ENCODE measurements at regions of chr14 and their contacts with region 1.

Region 1: DNA sequence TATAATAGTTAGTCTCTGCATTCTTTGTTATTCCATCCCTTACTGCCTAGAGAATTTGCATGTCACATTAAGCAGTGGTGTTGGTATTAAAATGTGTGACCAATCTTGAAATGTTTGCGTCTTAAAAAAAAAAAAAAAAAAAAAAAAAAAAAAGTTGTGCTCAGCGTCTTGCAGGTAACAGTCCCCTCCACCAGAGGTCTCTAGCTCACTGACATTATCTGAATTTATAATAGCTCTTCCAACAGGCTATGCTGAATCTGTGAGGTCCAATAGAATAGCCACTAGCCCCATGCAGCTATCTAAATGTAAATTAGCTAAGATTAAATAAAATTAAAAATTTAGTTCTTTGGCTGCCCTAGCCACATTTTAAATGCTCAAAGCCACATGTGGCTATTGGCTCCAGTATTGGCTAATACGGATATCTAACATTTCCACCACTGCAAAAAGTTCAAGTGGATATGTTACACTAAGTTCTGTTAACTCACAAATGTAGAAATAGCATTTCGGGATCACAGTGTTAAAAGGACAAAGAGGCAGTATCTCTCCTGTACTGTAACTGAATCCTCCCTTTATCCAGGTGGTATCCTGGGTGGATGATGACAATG is 28.7 kb downstream of the NKX2-8 start:
- DNase-seq: no peak
- H3K4me3 ChIP-seq: no peak overlapping the region
- H3K27ac ChIP-seq: no peak overlapping the region
- H3K4me1 ChIP-seq: no peaks in the 10 kb centered on the region
- H3K27me3 ChIP-seq: no peaks in the 10 kb centered on the region
- CTCF ChIP-seq: peak; percentile 49

Region 2: DNA sequence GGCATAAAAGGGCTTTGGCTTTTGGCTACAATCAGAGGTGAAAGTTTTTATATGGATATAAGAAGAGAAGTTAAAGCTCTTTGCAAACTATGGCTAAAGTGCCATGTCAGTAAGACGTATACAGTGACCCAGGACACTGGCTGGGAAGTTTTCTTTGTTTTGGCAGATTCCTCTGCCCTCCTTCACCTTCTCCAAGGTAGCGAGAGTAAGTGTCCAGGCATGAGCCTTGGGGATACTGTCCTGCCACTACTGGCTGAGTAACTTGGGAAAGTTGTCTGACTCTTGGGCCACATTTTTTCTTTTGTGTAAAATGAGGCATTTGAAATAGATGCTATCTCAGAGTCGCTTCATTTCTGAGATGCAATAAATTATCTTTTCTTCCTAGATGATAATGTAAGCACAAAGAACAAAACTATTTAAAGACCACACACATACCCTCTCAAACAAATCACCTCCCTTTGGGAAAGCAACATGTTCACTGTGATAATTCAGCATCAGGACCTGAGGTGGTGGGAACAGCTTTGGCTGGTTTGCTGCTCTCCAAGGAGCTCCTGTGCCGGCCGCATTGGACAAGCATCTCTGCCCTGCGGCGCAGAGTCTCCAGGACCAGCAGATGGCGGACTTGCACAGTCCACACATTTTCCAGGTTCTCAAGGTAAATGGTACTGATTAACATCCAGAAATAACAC is 483.6 kb before region 1 on chr14:
- intact Hi-C with region 1: loop called (anchors 5 kb)
- DNase-seq: peak; percentile 48
- H3K4me3 ChIP-seq: no peak overlapping the region
- H3K27ac ChIP-seq: no peak overlapping the region
- H3K4me1 ChIP-seq: no peaks in the 10 kb centered on the region
- H3K27me3 ChIP-seq: no peaks in the 10 kb centered on the region
- CTCF ChIP-seq: peak; percentile 48

Region 3: DNA sequence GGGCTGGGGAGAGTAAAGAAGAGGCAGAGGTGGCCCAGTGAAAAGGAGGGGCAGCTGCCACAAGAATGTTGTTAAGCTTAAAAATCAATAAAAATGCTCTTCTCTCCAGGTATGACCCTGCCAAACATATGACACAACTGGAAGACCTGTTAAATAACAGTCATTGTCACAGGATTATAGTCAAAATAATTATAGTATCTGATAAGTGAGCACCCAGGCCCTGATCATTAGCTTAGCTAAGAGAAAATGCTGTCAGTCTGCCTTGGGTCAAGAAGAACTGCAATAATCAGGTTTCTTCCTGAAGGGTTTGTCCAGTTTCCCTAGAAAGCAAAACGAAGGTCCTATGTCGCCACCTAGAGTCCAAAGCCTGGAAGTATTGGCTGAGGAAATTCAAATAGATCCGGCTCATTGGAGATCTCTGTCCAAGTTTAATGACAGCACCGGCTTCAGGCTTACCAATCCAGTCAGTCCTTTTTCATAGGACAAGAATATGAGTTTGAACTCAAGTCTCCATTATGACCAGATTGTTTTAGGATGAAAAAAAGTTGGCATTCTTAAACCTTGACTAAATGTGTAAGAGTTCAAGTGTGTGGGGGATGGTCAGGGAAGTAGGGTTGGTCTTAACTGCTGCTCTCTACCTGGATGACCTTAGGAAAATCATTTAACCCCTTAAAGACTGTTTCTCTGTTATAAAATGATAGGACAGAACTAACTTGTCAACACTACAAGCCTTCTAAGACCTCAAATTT is 51.2 kb after region 1 on chr14:
- intact Hi-C with region 1: loop called (anchors 5 kb)
- DNase-seq: peak; percentile 60
- H3K4me3 ChIP-seq: no peak overlapping the region
- H3K27ac ChIP-seq: no peak overlapping the region
- H3K4me1 ChIP-seq: no peaks in the 10 kb centered on the region
- H3K27me3 ChIP-seq: no peaks in the 10 kb centered on the region
- CTCF ChIP-seq: peak; percentile 65

Region 4: DNA sequence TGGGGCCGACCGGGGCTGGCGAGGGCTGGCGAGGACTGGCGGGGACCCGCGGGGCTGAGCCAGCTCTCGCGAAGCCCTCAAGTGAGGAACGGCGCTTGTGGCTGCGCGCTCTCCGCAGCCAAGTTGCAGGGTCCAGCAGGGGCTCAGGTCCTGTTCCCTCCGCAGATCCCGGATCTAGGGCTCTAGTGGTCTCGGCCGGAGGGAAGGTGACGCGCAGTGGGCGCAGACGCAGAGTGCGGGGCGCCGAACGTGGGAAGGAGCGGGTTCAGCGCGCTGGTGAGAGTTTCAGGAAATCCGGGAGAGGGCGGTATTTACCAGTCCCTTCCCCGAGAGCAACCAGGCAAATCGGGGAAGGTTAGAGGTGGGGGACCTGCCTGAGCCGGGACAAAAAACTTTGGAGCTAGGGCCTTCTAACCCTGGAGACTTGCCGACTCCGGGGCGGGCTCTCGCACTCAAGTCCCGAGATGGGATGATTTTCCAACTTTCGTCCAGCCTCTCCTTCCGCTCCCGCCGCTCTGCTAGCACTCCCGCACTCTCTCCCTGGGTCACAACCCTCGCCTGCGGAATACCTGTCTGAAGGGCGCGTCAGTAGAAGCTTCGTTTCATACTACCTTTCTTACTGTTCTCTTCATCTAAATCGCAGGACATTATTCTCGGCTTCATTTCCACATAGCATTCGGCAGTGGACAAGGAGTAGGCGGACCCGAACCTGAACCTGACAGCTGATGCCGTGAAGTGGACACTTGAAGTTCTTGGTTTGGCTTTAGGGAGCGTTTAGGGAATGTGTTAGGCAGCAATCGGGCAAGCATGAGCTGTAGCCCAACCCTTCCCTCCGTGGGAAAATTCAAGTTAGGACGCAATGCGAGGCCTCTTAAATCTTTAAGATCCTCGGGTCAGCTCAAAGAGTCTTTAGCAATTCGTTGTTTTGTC is 94.3 kb after region 1 on chr14:
- intact Hi-C with region 1: no loop called
- DNase-seq: no peak
- H3K4me3 ChIP-seq: peak overlapping the region; percentile 37
- H3K27ac ChIP-seq: no peak overlapping the region
- H3K4me1 ChIP-seq: peaks cover 11% of the 10 kb centered on the region
- H3K27me3 ChIP-seq: peaks cover 73% of the 10 kb centered on the region
- CTCF ChIP-seq: peak; percentile 52

Region 5: DNA sequence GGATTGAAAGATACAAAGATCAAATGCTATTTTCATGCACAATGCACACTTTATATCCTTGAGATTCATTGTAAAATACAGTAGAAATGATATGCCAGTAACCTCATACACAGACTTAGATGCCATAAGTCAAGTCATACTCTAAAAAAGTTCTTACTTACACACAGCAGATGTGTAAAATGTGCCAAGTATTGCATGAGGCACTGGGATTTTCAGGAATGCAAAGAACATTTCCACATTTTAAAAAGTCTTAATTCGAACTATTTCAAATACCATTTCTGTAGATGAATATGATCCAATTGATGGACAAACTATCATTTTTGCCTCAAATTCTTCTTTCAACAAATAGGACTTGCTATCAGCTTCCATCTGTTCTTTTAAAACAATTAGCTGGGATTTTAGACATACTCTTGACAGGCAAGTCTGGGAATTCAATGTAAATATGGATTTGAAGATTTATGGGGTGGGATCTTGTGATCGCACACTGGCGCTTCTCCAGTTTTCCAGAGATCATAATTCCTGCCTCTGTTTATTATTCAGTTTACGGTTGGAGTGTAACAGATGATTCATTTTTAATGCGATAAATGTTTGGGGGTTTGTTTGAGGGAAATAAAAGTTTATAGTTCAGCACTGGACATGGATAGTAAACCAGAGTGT is 291.7 kb after region 1 on chr14:
- intact Hi-C with region 1: no loop called
- DNase-seq: no peak
- H3K4me3 ChIP-seq: no peak overlapping the region
- H3K27ac ChIP-seq: no peak overlapping the region
- H3K4me1 ChIP-seq: no peaks in the 10 kb centered on the region
- H3K27me3 ChIP-seq: no peaks in the 10 kb centered on the region
- CTCF ChIP-seq: no peak

Region 6: DNA sequence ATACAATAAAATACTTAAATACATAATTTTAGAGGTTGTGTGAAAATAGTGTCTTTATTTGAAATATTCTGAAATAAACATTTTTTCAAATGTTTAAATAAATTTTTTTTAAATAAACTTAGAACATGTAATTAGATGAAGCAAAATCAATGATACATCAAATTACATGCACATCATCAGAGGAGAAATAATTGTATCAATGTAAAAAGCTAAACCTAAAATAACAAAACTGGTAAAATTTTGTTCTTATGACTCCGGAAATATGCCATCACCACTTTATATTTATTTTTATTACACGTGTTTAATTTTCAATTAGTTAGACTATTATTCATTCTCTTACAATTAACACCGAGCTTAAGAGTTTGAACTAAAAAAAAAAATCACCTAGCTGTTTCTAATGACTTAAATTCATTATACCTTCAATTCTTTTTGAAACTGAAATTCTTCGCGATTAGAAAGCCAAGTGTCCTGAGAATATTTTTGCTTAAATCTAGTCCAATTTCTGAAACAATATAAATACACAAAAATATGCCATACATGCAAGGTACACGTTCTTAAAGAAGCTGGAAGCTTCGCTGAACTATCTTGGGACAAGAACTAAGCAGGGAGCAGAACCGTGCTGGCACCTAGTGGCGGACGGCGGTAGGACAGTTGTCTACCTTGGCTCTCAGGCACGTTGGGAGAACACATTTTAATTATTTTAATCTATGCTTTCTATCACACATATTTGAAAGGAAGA is 388.2 kb after region 1 on chr14:
- intact Hi-C with region 1: loop called (anchors 10 kb)
- DNase-seq: peak; percentile 78
- H3K4me3 ChIP-seq: no peak overlapping the region
- H3K27ac ChIP-seq: no peak overlapping the region
- H3K4me1 ChIP-seq: no peaks in the 10 kb centered on the region
- H3K27me3 ChIP-seq: no peaks in the 10 kb centered on the region
- CTCF ChIP-seq: peak; percentile 92

Region 7: DNA sequence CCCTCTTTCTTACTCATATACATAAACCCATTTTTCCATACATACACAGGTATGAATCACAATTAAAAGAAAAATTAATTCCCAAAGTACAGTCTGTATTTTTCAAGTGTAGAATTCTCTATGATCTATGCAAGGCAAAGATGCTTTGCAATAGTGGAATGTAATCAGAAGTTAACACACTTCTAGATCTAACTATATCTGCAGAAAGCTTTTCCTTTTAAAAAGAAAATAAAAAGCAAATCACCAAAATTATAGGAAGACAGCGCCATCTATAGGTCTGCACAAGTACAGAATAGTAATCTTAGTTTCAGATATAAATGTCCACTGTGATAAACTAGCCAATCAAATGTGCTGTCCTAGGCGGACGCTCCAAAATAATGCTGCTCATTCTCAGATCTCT is 596.7 kb after region 1 on chr14:
- intact Hi-C with region 1: loop called (anchors 10 kb)
- DNase-seq: no peak
- H3K4me3 ChIP-seq: no peak overlapping the region
- H3K27ac ChIP-seq: no peak overlapping the region
- H3K4me1 ChIP-seq: no peaks in the 10 kb centered on the region
- H3K27me3 ChIP-seq: no peaks in the 10 kb centered on the region
- CTCF ChIP-seq: peak; percentile 53